OCI-LY7 (cell line): ENCODE measurements at regions of chr6 and their contacts with region 1.

Region 1: GRCh38 chr6:6331946-6332601 is 11.6 kb upstream of the F13A1 start:
- DNase-seq: peak; percentile 94
- H3K4me3 ChIP-seq: peak overlapping the region; percentile 64
- H3K27ac ChIP-seq: peak overlapping the region; percentile 97
- H3K4me1 ChIP-seq: peaks cover 77% of the 10 kb centered on the region
- CTCF ChIP-seq: no peak

Region 2: DNA sequence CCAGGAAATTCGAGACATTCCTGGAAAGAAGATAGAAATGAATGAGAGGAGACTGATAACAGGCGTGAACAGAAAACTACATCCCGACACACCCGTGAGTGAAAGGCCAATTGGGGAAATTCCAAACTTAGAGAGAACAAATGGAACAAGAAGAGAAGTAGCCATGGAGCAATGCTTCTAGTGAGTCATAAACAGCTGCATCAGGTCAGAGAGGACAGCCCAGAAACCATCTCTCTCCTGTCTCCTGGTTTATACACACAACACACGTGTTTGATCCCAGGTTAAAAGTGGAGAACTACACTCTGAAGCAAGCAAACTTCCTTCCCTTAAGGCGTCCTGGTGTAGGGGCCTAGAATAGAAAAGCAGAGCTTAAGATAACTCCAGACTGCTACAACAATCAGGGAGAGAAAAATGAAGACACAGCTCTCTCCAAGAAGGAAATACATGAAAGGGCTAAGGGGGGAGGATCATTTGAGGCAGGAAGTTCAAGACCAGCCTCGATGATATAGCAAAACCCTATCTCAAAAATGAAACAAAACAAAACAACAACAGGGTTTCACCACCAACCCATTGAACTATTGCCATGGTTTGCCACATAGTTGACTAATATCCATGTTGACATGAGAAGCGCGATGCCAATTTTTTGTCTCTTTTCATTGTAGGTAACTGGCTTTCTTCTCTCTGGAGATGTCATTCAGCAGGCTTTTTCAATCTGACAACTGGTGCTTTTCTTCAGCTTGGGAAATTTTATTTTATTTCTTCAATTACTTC is 352.2 kb before region 1 on chr6:
- CTCF ChIA-PET with region 1: no interaction called
- POLR2A ChIA-PET with region 1: no interaction called
- intact Hi-C with region 1: no loop called
- DNase-seq: no peak
- H3K4me3 ChIP-seq: no peak overlapping the region
- H3K27ac ChIP-seq: no peak overlapping the region
- H3K4me1 ChIP-seq: no peaks in the 10 kb centered on the region
- CTCF ChIP-seq: no peak

Region 3: DNA sequence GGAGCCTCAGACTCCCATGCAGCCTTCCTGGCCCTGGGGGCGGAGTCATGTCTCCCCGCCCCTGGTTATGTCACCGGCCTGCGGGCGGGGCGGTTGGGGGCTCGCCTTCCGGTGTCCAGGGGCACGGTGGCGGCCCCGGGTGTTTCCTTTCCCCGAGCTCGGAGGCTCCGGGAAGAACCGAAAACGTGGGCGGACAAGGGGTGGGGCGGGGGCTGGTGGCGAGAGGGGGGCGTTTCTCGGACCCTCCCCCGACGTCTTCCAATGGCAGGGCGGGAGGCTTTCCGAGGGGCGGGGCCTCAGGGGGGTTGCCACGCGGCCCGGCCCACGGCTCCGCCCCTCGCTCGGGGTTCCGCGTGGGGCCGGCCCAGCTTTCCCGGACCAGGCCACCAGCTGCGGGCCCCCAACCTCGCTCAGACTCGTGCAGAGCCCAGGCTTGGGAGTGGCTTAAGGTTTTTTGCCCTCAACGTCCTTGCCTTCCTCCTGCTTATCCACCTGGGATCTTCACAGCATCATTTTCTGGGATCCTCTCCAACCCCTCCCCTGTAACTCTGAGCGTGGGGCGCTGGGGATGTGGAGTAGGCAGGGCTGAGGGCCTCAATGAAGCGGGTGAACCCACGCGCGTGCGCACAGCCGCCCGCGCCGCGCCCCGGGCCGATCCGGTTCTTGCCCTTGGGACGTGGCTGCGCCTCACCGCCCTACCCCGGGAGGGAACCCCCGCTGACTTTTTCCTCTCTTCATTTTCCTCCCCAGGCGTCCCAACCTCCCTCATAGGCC is 323.2 kb before region 1 on chr6:
- CTCF ChIA-PET with region 1: no interaction called
- POLR2A ChIA-PET with region 1: interaction called, 7 read pairs
- intact Hi-C with region 1: loop called (anchors 5 kb)
- DNase-seq: peak; percentile 95
- H3K4me3 ChIP-seq: peak overlapping the region; percentile 73
- H3K27ac ChIP-seq: peak overlapping the region; percentile 72
- H3K4me1 ChIP-seq: peaks cover 29% of the 10 kb centered on the region
- CTCF ChIP-seq: no peak

Region 4: GRCh38 chr6:6046716-6047115 is 285.4 kb before region 1 on chr6:
- CTCF ChIA-PET with region 1: no interaction called
- POLR2A ChIA-PET with region 1: no interaction called
- intact Hi-C with region 1: no loop called
- DNase-seq: no peak
- H3K4me3 ChIP-seq: no peak overlapping the region
- H3K27ac ChIP-seq: no peak overlapping the region
- H3K4me1 ChIP-seq: no peaks in the 10 kb centered on the region
- CTCF ChIP-seq: no peak

Region 5: GRCh38 chr6:6346427-6347023 is 14.5 kb after region 1 on chr6:
- CTCF ChIA-PET with region 1: interaction called, 3 read pairs
- POLR2A ChIA-PET with region 1: interaction called, 15 read pairs
- intact Hi-C with region 1: no loop called
- DNase-seq: no peak
- H3K4me3 ChIP-seq: no peak overlapping the region
- H3K27ac ChIP-seq: no peak overlapping the region
- H3K4me1 ChIP-seq: peaks cover 2% of the 10 kb centered on the region
- CTCF ChIP-seq: no peak

Region 6: GRCh38 chr6:6386010-6386409 is 53.9 kb after region 1 on chr6:
- CTCF ChIA-PET with region 1: no interaction called
- POLR2A ChIA-PET with region 1: interaction called, 59 read pairs
- intact Hi-C with region 1: no loop called
- DNase-seq: no peak
- H3K4me3 ChIP-seq: no peak overlapping the region
- H3K27ac ChIP-seq: peak overlapping the region; percentile 82
- H3K4me1 ChIP-seq: peaks cover 91% of the 10 kb centered on the region
- CTCF ChIP-seq: no peak

Region 7: DNA sequence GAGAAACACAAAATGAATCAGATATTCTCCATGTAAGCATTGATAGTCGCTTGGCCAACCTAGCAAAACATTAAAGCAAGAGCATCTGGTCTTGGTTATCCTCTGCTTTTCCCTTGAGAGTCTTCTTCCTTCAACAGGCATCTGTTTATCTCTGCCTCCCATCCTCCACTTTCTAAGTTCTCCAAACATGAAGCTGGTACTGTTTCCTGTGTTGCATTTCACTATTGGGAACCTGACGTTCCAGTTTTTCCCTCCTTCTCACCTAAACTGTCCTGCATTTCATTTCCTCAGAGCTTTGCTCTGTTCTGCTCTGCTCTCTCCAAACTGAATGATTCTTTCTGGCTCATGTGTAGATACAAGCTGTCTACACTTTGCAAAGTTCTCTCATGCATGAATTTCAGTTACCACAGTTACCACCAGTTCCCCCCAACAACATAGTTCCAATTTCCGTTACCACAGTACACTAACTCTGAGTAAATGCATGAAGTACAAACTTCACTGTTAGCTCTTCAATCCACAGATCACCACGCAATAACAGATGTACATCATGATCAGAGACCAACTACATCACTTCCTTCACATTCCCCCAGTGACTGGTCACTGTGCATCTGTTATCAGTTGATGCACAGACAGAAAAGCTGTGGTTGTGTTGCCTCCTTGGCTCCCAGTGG is 75.1 kb after region 1 on chr6:
- CTCF ChIA-PET with region 1: interaction called, 3 read pairs
- POLR2A ChIA-PET with region 1: interaction called, 19 read pairs
- intact Hi-C with region 1: loop called (anchors 1 kb)
- DNase-seq: peak; percentile 92
- H3K4me3 ChIP-seq: peak overlapping the region; percentile 54
- H3K27ac ChIP-seq: peak overlapping the region; percentile 94
- H3K4me1 ChIP-seq: peaks cover 85% of the 10 kb centered on the region
- CTCF ChIP-seq: no peak

Region 8: DNA sequence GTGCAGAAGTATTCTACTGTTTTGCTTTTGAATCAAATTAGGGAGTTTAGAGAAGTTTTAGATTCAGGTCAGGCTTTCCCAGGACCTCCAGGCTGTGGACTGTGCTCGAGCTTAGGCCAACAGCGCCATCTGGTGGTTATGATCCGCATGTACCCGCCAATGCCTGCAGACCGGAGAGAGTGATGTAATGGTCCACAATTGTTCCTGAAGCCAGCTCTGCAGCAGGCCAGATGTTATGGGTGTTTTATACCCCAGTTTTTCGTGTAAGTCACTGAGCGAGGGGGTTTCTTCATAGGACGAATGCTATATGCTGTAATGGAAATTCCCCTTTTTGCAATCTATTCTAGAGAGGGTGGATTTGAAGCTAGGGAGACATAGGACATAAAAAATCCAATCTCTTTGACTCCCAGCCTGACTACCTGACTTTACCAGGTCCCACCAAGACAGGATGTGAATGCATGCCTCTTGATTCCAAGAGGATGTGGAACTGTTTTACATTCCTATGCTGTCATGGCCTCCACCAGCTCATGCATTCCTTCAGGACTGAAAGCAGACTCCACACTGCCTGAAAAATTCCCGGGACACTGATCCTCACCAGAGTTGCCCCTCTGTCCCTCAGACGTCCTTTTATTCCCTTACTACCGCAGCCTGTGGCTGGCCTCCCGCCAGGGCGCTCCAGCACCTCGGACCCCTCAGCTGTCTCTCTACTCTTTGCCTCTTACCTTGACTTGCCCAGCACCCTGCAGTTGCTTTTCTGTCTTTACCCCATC is 215.2 kb after region 1 on chr6:
- CTCF ChIA-PET with region 1: no interaction called
- POLR2A ChIA-PET with region 1: interaction called, 5 read pairs
- intact Hi-C with region 1: loop called (anchors 2 kb)
- DNase-seq: peak; percentile 87
- H3K4me3 ChIP-seq: peak overlapping the region; percentile 37
- H3K27ac ChIP-seq: no peak overlapping the region
- H3K4me1 ChIP-seq: peaks cover 20% of the 10 kb centered on the region
- CTCF ChIP-seq: peak; percentile 97